ENCODE measurements at regions of chr2 and their contacts with region 1.

Region 1: DNA sequence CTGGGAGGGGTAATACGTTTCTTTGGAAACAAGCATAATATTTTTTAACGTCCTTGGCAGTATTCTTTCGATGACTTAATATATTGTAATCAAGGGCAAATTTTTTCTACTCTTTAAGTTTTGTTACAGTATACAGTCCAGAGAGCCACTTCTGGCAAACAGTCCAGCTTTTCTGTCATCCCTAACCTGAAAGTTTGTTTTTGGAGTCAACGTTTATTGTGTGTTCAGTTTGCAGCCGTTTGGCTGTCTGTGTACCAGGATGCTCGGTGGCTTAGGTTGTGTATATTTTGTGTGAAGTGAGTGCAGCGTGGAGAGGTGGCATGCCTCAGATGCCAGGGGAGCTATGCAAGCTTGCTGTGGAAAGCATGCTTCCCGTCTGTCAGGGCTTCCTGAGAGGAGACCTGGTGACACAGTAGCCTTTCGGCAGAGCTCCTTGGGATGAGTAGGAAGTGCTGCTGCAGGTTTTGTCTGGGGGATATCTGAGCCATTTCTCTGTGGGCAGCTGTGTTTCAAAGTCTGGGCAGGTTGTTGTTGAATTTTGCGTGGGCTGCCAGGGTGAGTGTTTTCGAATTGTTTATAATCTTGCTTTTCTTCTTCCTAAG is 14.7 kb downstream of the MAP3K20 start:
- DNase-seq: peak in 4 of 5 donors; percentile 34 to 66 (median 50)
- ATAC-seq: peak; percentile 57 to 83 (median 74)
- H3K4me3 ChIP-seq: peak overlapping the region in 7 of 12 donors; percentile 4 to 34 (median 30)
- H3K27ac ChIP-seq: peak overlapping the region; percentile 48 to 85 (median 75)
- H3K4me1 ChIP-seq: peaks cover 0 to 77% (median 22%) of the 10 kb centered on the region in 12 donors
- H3K27me3 ChIP-seq: no peaks in the 10 kb centered on the region
- CTCF ChIP-seq: no peak
- POLR2A ChIP-seq: no peak

Region 2: DNA sequence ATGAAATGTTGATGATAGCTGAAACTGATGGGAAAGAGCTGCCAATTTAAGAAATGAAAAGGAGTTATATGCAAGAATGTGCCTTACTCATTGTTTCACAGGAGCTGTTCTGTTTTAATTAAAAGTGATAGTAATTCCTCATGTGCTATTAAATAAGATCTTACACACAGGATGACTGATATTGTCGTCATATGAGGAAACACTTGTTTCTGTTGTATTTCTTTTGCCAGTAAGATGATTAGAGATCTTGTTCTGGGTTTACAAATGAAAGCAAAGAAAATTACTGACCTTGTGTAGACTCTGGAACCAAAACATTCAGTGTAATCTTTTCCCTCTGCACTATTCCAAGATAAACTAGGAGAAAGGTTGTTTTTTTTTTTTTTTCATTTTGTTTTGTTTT is 108.9 kb after region 1 on chr2:
- intact Hi-C with region 1: loop called in 1 of 10 experiments (anchors 5 kb)
- DNase-seq: no peak
- ATAC-seq: peak in 2 of 4 donors; percentile 30 to 79
- H3K4me3 ChIP-seq: no peak overlapping the region
- H3K27ac ChIP-seq: peak overlapping the region in 10 of 12 donors; percentile 1 to 46 (median 34)
- H3K4me1 ChIP-seq: peaks cover 2 to 68% (median 42%) of the 10 kb centered on the region in 12 donors
- H3K27me3 ChIP-seq: no peaks in the 10 kb centered on the region
- CTCF ChIP-seq: no peak
- POLR2A ChIP-seq: no peak

Region 3: GRCh38 chr2:173370198-173370597 is 279.8 kb after region 1 on chr2:
- intact Hi-C with region 1: no loop called
- DNase-seq: no peak
- ATAC-seq: no peak
- H3K4me3 ChIP-seq: no peak overlapping the region
- H3K27ac ChIP-seq: peak overlapping the region in 1 of 12 donors; percentile 43
- H3K4me1 ChIP-seq: peaks cover 0 to 8% (median 0%) of the 10 kb centered on the region in 12 donors
- H3K27me3 ChIP-seq: no peaks in the 10 kb centered on the region
- CTCF ChIP-seq: no peak
- POLR2A ChIP-seq: no peak